ENCODE measurements at regions of chr20 and their contacts with region 1.

Region 1: DNA sequence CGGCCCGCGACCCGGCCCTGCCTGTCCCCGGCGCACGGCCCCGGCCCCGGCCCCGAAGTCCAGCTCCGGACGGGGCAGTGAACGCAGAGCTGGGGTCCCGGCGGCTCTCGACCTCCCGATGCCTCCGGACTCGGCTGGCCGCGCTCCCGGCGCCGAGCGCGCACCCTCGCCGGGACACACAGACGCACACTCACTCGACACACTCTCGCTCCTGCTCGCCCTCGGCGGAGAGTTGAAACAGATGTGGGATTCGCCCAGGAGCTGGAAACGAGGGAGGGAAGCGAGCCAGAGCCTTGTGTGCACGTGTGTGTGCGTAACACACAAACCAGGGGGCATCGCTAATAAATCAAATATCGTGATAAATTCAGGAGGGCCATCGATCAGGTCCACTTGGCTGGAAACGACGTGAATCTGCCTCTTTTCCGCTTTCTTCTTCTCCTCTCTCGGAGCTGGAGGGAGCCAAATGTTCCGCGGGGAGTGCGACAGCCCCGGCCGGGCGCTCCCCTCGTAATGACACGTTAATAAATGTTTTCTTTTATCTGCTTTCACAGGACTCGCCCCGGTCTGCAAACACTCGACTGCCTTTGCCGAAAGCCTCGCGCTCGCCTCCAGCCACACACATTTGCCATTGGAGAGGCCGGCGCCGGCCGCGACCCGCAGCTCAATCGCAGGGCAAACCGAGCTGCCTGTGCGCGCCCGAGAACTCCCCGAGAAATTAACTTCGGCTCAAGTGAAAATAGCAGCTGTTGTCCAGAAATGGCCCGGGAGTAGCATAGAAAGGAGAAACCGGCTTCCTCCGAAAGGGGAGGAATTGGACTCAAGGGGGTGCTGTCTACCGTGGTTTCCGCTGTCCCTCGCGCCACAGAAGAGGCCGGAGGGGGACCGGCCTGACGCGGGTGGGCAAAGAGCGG is 828 bp upstream of the SULF2 start:
- DNase-seq: no peak
- H3K4me3 ChIP-seq: peak overlapping the region; percentile 62 to 86 (median 72)
- H3K27ac ChIP-seq: peak overlapping the region; percentile 88 to 94 (median 89)
- H3K4me1 ChIP-seq: peaks cover 25 to 78% (median 34%) of the 10 kb centered on the region in 3 donors
- H3K27me3 ChIP-seq: peaks cover 0 to 12% (median 0%) of the 10 kb centered on the region in 4 donors
- CTCF ChIP-seq: peak; percentile 53 to 77 (median 69)
- POLR2A ChIP-seq: peak in 2 of 4 donors; percentile 24 to 30

Region 2: GRCh38 chr20:48015943-48016723 is 230.0 kb after region 1 on chr20:
- intact Hi-C with region 1: no loop called
- DNase-seq: no peak
- H3K4me3 ChIP-seq: no peak overlapping the region
- H3K27ac ChIP-seq: no peak overlapping the region
- H3K4me1 ChIP-seq: no peaks in the 10 kb centered on the region
- H3K27me3 ChIP-seq: peaks cover 0 to 6% (median 0%) of the 10 kb centered on the region in 4 donors
- CTCF ChIP-seq: no peak
- POLR2A ChIP-seq: no peak

Region 3: DNA sequence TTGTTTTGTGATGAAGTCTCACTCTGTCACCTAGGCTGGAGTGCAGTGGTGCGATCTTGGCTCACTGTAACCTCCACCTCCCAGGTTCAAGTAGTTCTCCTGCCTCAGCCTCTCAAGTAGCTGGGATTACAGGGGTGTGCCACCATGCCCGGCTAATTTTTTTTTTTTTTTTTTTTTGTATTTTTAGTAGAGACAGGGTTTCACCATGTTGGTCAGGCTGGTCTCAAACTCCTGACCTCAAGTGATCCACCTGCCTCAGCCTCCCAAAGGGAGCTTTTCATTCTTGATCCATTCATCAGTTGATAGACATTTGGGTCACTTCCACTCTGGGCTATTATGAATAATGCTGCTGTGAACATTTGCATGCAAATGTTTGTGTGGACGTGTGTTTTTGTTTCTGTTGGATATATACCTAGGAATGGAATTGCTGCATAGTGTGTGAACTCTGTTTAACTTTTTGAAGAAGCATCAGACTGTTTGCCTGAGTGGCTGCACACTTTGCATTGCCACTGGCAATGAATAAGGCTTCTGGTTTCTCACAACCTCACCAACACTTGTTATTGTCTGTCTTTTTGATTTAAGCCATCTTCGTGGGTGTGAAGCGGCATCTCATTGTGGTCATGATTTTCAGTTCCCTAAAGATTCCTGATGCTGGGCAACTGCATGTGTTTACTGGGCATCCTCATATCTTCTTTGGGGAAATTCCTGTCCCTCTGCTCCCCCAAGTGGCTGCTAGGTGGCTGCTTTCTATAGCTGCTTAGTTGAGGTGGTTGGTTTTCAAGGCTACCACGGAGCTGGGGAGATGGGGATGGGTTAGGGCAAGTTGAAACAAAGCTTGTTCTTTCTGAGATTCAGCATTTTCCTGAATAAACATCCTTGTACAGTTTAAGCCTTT is 402.8 kb after region 1 on chr20:
- intact Hi-C with region 1: loop called (anchors 10 kb)
- DNase-seq: no peak
- H3K4me3 ChIP-seq: no peak overlapping the region
- H3K27ac ChIP-seq: peak overlapping the region in 1 of 4 donors; percentile 79
- H3K4me1 ChIP-seq: peaks cover 17 to 76% (median 34%) of the 10 kb centered on the region in 3 donors
- H3K27me3 ChIP-seq: no peaks in the 10 kb centered on the region
- CTCF ChIP-seq: peak in 5 of 6 experiments; percentile 32 to 66 (median 63)
- POLR2A ChIP-seq: no peak

Region 4: GRCh38 chr20:48295445-48295963 is 509.4 kb after region 1 on chr20:
- intact Hi-C with region 1: loop called (anchors 5 kb)
- DNase-seq: no peak
- H3K4me3 ChIP-seq: no peak overlapping the region
- H3K27ac ChIP-seq: peak overlapping the region in 1 of 4 donors; percentile 17
- H3K4me1 ChIP-seq: peaks cover 7 to 31% (median 13%) of the 10 kb centered on the region in 3 donors
- H3K27me3 ChIP-seq: no peaks in the 10 kb centered on the region
- CTCF ChIP-seq: peak in 4 of 6 experiments; percentile 18 to 41 (median 26)
- POLR2A ChIP-seq: no peak

Region 5: DNA sequence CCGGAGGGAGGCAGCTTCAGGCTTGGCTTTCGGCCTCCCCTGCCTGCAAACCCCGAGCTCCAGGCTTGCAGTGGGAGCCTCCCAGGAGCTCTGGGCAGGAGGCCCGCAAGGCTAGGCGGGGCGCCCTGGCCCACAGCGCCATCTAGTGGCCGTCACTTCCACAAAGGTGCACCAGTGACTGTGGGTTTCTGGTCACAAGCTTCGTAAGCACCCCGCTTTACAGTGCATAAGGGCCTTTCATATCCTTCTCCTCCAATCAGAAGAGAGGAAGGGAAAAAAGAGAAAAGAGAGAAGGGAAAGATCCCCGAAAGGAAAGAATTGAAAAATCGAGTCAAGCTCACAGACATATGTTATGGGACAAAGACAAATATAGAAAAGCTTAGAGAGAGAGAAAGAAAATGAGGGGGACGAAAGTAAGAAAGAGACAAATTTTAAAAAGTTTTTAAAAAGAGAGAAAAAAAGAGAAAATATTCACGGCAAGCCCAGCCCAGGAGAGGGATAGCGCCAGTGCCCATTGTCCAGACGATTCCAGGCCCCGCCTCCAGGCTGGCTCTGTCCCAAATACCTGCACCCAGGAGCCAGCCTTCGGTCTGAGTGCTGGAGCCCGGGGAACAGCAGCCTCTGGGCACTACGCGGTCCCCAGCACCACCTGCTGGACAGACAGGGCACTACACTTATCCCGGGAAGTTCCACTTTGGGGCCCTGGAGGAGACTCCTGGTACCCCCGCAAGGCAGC is 834.6 kb after region 1 on chr20:
- intact Hi-C with region 1: loop called (anchors 5 kb)
- DNase-seq: no peak
- H3K4me3 ChIP-seq: peak overlapping the region; percentile 13 to 35 (median 30)
- H3K27ac ChIP-seq: no peak overlapping the region
- H3K4me1 ChIP-seq: peaks cover 10 to 26% (median 15%) of the 10 kb centered on the region in 3 donors
- H3K27me3 ChIP-seq: peaks cover 0 to 19% (median 0%) of the 10 kb centered on the region in 4 donors
- CTCF ChIP-seq: peak; percentile 44 to 96 (median 94)
- POLR2A ChIP-seq: no peak